ENCODE measurements at regions of chr7 and their contacts with region 1.

Region 1: GRCh38 chr7:24572997-24573625 is at the start of gene PALS2:
- DNase-seq: peak; percentile 58
- ATAC-seq: peak; percentile 76
- H3K4me3 ChIP-seq: peak within 1 kb of the TSS; percentile 98
- H3K27ac ChIP-seq: peak within 1 kb of the TSS; percentile 65
- H3K4me1 ChIP-seq: 0 out of 2 replicates have a peak, but pooled peaks cover 2% of the 10 kb centered on the region
- H3K27me3 ChIP-seq: peaks cover 26% of the 10 kb centered on the region
- CTCF ChIP-seq: no peak
- POLR2A ChIP-seq: no peak
- RAD21 ChIP-seq: no peak
- total RNA-seq, gene PALS2: 15.4 and 29.7 TPM in 2 replicates

Region 2: GRCh38 chr7:24401628-24402593 is 171.2 kb before region 1 on chr7:
- CTCF ChIA-PET with region 1: no interaction called
- POLR2A ChIA-PET with region 1: no interaction called
- dilution Hi-C with region 1: no loop called
- in situ Hi-C with region 1: no loop called
- intact Hi-C with region 1: loop called (anchors 5 kb)
- DNase-seq: peak; percentile 40
- ATAC-seq: peak; percentile 63; the same call in 1 of the 2 replicates
- H3K4me3 ChIP-seq: peak overlapping the region; percentile 45
- H3K27ac ChIP-seq: no peak overlapping the region
- H3K4me1 ChIP-seq: no peaks in the 10 kb centered on the region
- H3K27me3 ChIP-seq: peaks cover 3% of the 10 kb centered on the region
- CTCF ChIP-seq: peak; percentile 53
- POLR2A ChIP-seq: no peak
- RAD21 ChIP-seq: peak; percentile 56

Region 3: DNA sequence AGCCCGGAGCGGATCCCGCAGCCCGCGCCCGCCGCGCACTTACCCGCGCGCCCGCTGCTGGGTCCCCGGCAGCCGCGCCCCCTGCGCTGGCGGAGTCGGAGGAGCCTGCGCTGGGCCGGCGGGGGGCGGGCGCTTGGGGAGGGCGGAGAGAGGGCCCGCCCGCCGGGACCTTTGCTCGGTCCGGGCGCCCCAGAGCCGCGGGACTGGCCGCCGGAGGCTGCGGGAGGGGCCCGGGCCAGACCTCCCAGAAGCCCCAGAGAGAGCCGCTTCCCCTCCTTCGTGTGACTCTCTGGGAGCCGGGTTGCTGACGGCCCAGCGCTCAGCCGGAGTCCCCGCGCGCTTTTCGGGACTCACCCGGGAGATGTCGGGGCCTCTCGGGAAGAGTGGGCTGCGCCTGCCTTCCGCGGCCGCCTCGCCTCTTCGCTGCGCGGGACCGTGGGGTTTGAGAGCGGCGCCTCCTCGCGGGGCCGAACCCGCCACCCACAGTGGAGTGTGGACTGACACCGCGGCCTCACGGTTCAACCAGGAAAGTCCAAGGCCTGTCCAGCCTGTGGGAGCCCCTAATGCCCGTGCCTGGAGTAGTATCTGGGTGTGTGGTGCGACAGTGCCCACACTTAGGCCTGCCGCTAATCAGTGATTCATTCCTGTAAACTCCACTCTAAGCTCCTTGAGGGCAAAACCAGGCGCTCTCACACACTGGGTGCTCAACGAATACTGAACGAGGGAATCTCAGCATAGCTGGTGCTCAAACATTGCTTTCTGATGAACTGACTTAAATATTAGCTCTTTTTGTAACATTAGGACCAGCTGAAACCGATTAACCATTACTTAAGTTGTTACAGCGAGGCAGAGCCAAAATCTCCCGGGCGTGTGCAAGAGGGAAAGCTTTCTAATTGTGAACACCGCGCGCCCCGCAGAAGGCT is 184.5 kb after region 1 on chr7 and contains the start of gene GSDME:
- CTCF ChIA-PET with region 1: no interaction called
- POLR2A ChIA-PET with region 1: no interaction called
- dilution Hi-C with region 1: no loop called
- in situ Hi-C with region 1: no loop called
- intact Hi-C with region 1: loop called (anchors 5 kb)
- DNase-seq: peak; percentile 51
- ATAC-seq: peak; percentile 94
- H3K4me3 ChIP-seq: peak within 1 kb of the TSS; percentile 76
- H3K27ac ChIP-seq: peak within 1 kb of the TSS; percentile 86
- H3K4me1 ChIP-seq: peaks cover 13% of the 10 kb centered on the region
- H3K27me3 ChIP-seq: no peaks in the 10 kb centered on the region
- CTCF ChIP-seq: 0 out of 2 replicates have a peak, but pooled peaks have one; percentile 10
- POLR2A ChIP-seq: no peak
- RAD21 ChIP-seq: no peak
- total RNA-seq, gene GSDME: 78.7 and 88.3 TPM in 2 replicates

Region 4: GRCh38 chr7:25109276-25109675 is 536.2 kb after region 1 on chr7:
- CTCF ChIA-PET with region 1: no interaction called
- POLR2A ChIA-PET with region 1: no interaction called
- dilution Hi-C with region 1: no loop called
- in situ Hi-C with region 1: loop called (anchors 10 kb)
- intact Hi-C with region 1: no loop called
- DNase-seq: no peak
- ATAC-seq: no peak
- H3K4me3 ChIP-seq: no peak overlapping the region
- H3K27ac ChIP-seq: no peak overlapping the region
- H3K4me1 ChIP-seq: peaks cover 5% of the 10 kb centered on the region
- H3K27me3 ChIP-seq: no peaks in the 10 kb centered on the region
- CTCF ChIP-seq: no peak
- POLR2A ChIP-seq: no peak
- RAD21 ChIP-seq: no peak